Common myeloid progenitor, CD34-positive (primary cell): ENCODE measurements at regions of chr14 and their contacts with region 1.

Region 1: DNA sequence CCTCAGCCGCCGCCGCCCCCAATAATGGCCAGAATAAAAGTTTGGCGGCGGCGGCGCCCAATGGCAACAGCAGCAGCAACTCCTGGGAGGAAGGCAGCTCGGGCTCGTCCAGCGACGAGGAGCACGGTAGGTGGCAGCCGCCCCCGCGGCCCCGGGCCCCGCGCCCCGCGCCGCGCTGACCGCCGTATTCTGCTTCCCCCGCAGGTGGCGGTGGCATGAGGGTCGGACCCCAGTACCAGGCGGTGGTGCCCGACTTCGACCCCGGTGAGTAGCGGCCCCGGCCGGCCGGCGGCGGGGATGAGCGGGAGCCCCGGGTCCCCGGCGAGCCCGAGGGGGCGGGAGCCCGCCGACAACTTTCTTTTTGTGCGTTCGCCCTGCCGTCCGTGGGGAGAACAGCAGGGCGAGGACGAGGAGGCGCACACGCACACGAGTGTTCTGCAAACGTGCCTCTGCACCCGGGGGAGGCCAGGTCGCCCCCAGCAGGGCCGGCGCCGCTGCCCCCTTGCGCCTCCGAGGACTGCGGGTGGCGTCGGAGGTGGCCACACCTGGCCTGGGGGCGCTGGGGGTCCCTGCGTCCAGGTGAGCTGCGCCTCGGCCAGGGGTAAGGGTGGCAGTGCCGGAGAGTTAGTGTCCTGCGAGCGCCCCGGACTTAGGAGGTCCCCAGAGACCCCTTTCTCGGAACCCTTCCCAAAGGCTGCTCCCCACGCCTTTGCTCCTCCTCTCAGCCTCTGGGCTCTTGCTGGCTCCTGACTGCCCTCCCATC is 794 bp downstream of the RCOR1 start:
- DNase-seq: peak; percentile 58 to 82 (median 77)
- H3K4me3 ChIP-seq: peak overlapping the region; percentile 63 to 95 (median 84)
- H3K27ac ChIP-seq: peak overlapping the region; percentile 54 to 81
- H3K4me1 ChIP-seq: peaks cover 7 to 25% (median 16%) of the 10 kb centered on the region in 4 experiments
- H3K27me3 ChIP-seq: no peaks in the 10 kb centered on the region

Region 2: GRCh38 chr14:102524466-102525218 is 68.6 kb before region 1 on chr14:
- CTCF ChIA-PET with region 1: interaction called, 13 read pairs
- POLR2A ChIA-PET with region 1: no interaction called
- DNase-seq: peak; percentile 96 to 98 (median 97)
- H3K4me3 ChIP-seq: peak overlapping the region; percentile 53 to 89 (median 79)
- H3K27ac ChIP-seq: peak overlapping the region in 1 of 2 experiments; percentile 63
- H3K4me1 ChIP-seq: peaks cover 3 to 27% (median 22%) of the 10 kb centered on the region in 4 experiments
- H3K27me3 ChIP-seq: no peaks in the 10 kb centered on the region

Region 3: DNA sequence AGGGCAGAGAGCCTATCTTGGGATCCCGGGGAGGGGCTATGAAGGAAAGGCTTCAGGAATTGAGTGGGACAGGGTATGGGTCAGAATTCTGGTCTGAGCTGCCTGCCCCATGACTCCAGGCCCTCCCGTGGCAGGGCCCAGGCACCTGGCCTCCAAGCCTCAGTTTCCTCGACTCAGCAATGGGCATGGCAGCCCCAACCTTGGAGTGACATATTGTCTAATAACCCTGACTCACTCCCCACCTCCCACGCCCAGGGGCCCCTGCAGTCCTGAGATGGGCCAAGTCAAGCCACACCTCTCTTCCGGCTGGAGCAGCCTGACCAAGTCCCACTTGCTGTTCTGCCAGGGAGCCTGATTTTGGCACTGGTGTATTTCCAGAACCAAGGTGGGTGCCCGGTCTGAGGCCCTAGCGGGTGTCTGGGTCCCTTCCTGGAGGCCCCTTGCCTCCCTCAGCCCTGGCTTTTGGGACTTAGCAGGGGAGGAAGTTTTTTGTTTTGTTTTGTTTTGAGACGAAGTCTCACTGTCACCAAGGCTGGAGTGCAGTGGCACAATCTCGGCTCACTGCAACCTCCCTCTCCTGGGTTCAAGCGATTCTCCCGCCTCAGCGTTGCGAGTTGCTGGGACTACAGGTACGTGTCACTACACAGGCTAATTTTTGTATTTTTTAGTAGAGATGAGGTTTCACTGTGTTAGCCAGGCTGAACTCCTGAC is 41.1 kb before region 1 on chr14:
- CTCF ChIA-PET with region 1: no interaction called
- POLR2A ChIA-PET with region 1: no interaction called
- DNase-seq: no peak
- H3K4me3 ChIP-seq: no peak overlapping the region
- H3K27ac ChIP-seq: peak overlapping the region in 1 of 2 experiments; percentile 66
- H3K4me1 ChIP-seq: peaks cover 0 to 11% (median 10%) of the 10 kb centered on the region in 4 experiments
- H3K27me3 ChIP-seq: peaks cover 0 to 4% (median 0%) of the 10 kb centered on the region in 5 experiments

Region 4: GRCh38 chr14:102579696-102580334 is 13.4 kb before region 1 on chr14:
- CTCF ChIA-PET with region 1: no interaction called
- POLR2A ChIA-PET with region 1: no interaction called
- DNase-seq: no peak
- H3K4me3 ChIP-seq: no peak overlapping the region
- H3K27ac ChIP-seq: no peak overlapping the region
- H3K4me1 ChIP-seq: peaks cover 0 to 5% (median 0%) of the 10 kb centered on the region in 4 experiments
- H3K27me3 ChIP-seq: no peaks in the 10 kb centered on the region

Region 5: GRCh38 chr14:102605025-102605424 is 11.8 kb after region 1 on chr14:
- CTCF ChIA-PET with region 1: interaction called, 28 read pairs
- POLR2A ChIA-PET with region 1: no interaction called
- DNase-seq: no peak
- H3K4me3 ChIP-seq: no peak overlapping the region
- H3K27ac ChIP-seq: no peak overlapping the region
- H3K4me1 ChIP-seq: peaks cover 0 to under 1% (median 0%) of the 10 kb centered on the region in 4 experiments
- H3K27me3 ChIP-seq: no peaks in the 10 kb centered on the region

Region 6: DNA sequence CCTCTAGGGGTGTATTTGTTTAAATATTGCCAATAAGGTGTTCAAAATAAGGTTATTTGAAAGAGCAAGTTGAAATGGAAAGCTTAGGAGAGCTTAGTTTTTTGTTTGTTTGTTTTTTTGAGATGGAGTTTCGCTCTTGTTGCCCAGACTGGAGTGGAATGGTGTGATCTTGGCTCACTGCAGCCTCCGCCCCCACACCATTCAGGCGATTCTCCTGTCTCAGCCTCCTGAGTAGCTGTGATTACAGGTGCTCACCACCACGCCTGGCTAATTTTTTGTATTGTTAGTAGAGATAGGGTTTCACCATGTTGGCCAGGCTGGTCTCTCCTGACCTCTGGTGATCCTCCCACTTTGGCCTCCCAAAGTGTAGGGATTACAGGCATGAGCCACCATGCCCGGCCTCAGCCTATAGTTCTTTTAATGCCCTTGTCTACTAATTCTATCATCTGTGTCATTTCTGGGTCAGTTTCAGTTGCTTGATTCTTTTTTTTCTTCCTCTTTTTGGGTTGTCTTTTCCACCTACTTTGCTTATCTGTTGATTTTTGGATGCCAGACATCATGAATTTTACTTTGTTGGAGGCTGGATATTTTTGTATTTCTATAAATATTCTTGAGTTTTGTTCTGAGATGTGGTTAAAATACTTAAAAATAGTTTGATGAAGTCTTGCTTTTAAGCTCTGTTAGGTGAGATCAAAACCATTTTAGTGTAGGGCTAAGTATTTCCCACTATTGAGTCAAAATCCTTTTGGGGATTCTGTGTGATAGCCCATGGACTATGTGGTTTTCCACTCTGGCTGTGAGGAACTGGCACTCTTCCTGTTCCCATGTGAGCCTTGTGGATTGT is 17.9 kb after region 1 on chr14:
- CTCF ChIA-PET with region 1: interaction called, 28 read pairs
- POLR2A ChIA-PET with region 1: interaction called, 4 read pairs
- DNase-seq: peak in 2 of 3 donors; percentile 25 to 30
- H3K4me3 ChIP-seq: no peak overlapping the region
- H3K27ac ChIP-seq: peak overlapping the region in 1 of 2 experiments; percentile 14
- H3K4me1 ChIP-seq: peaks cover 0 to 10% (median 6%) of the 10 kb centered on the region in 4 experiments
- H3K27me3 ChIP-seq: no peaks in the 10 kb centered on the region

Region 7: DNA sequence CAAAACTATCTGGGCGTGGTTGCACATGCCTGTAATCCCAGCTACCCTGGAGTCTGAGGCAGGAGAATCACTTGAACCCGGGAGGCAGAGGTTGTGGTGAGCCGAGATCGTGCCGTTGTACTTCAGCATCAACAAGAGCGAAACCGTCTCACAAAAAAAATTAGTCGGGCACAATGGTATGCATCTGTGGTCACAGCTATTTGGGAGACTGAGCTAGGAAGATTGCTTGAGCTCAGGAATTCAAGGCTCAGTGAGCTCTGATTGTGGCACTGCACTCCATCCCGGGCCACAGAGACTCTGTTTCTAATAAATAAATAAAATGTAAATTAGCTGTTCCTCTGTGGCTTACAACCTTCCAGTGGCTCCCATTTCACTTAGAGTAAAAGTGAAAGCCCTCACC is 27.2 kb after region 1 on chr14:
- CTCF ChIA-PET with region 1: interaction called, 20 read pairs
- POLR2A ChIA-PET with region 1: interaction called, 3 read pairs
- DNase-seq: no peak
- H3K4me3 ChIP-seq: no peak overlapping the region
- H3K27ac ChIP-seq: no peak overlapping the region
- H3K4me1 ChIP-seq: peaks cover 0 to 22% (median 13%) of the 10 kb centered on the region in 4 experiments
- H3K27me3 ChIP-seq: no peaks in the 10 kb centered on the region

Region 8: DNA sequence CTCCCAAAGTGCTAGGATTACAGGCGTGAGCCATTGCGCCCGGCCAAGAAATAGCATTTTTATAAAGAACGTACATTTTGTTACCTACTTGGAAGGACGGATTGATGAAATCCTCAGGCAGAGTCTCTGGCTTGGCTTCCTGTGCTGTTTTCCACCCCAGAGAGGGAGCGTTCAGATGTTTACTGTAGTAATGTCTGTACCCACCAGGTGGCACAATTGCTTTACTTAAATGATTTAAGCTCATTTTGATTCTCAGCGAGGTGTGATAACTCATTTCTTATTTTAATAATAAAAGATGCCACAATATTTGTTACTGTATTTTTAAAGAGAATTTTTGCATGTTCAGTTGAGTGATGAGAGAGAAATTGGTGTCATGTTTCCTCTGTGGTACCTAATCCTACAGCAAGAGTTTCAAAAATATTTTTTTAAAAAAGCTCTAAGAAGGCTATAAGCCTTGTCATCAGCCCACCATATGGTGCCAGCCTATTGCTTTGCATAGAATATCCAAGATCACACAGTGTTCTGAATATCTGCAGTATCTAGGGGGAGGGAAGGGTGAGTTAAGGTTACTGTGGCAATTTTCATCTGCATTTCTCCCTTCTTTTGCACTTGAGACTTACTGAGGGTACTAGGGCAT is 101.4 kb after region 1 on chr14:
- CTCF ChIA-PET with region 1: interaction called, 11 read pairs
- POLR2A ChIA-PET with region 1: no interaction called
- DNase-seq: peak; percentile 69 to 85 (median 79)
- H3K4me3 ChIP-seq: no peak overlapping the region
- H3K27ac ChIP-seq: no peak overlapping the region
- H3K4me1 ChIP-seq: peaks cover 6 to 17% (median 7%) of the 10 kb centered on the region in 4 experiments
- H3K27me3 ChIP-seq: no peaks in the 10 kb centered on the region